ENCODE measurements at regions of chr4 and their contacts with region 1.

Region 1: GRCh38 chr4:36292556-36293188 is 11.3 kb downstream of the DTHD1 start:
- DNase-seq: no peak
- ATAC-seq: no peak
- H3K4me3 ChIP-seq: no peak overlapping the region
- H3K4me3 Mint-ChIP-seq: no peak overlapping the region
- H3K27ac ChIP-seq: no peak overlapping the region
- H3K27ac Mint-ChIP-seq: no peak overlapping the region
- H3K4me1 ChIP-seq: peaks cover 0 to 4% of the 10 kb centered on the region in 2 experiments
- H3K4me1 Mint-ChIP-seq: peaks cover 0 to 17% (median 8%) of the 10 kb centered on the region in 3 donors
- H3K27me3 ChIP-seq: no peaks in the 10 kb centered on the region
- H3K27me3 Mint-ChIP-seq: no peaks in the 10 kb centered on the region

Region 2: GRCh38 chr4:36411327-36411726 is 118.7 kb after region 1 on chr4:
- CTCF ChIA-PET with region 1: no interaction called
- POLR2A ChIA-PET with region 1: interaction called in 1 of 2 experiments, 21 read pairs
- DNase-seq: no peak
- ATAC-seq: no peak
- H3K4me3 ChIP-seq: no peak overlapping the region
- H3K4me3 Mint-ChIP-seq: no peak overlapping the region
- H3K27ac ChIP-seq: no peak overlapping the region
- H3K27ac Mint-ChIP-seq: no peak overlapping the region
- H3K4me1 ChIP-seq: no peaks in the 10 kb centered on the region
- H3K4me1 Mint-ChIP-seq: no peaks in the 10 kb centered on the region
- H3K27me3 ChIP-seq: peaks cover 0 to 2% of the 10 kb centered on the region in 2 experiments
- H3K27me3 Mint-ChIP-seq: peaks cover 21 to 36% of the 10 kb centered on the region in 2 donors